ENCODE measurements at regions of chr3 and their contacts with region 1.

Region 1: DNA sequence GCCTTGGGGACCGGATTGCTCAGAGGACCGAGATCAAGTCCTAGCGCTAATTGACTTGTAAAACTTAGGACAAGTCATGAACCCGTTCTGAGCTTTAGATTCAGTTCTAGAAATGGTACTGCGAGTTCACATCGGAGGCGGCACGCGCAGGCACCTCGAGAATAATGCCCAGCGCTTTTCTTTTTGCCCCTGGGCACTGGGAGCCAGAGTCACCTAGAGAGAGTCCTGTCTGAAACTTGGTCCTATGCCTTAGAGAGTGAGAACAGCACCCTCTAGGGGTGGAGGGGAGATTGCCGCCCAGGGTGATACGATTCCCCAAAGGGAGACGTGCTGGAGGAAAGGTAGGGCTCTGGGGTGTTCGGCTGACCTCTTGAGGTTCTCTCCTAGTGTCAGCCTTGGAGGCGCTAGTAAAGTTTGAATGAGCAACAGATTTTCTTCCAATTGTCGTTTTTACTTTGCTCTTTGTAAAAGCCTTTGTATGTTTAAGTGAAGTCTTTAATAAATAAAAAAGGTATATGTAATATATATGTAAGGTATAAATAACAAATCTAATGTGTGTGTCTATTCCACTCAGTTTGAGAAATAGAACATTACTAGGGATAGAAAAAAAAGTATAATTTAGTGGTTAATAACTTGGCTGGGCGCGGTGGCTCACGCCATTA is 826 bp downstream of the EEF1AKMT4 start:
- DNase-seq: peak; percentile 86 to 90
- ATAC-seq: peak; percentile 86 to 87
- H3K4me3 ChIP-seq: peak overlapping the region; percentile 57
- H3K27ac ChIP-seq: peak overlapping the region; percentile 79 to 98
- H3K4me1 ChIP-seq: peaks cover 8% of the 10 kb centered on the region; the same call in 2 of the 3 replicates
- CTCF ChIP-seq: peak; percentile 73
- EP300 ChIP-seq: no peak
- POLR2A ChIP-seq: no peak
- RAD21 ChIP-seq: peak; percentile 62 to 63

Region 2: GRCh38 chr3:184261270-184261853 is 11.1 kb after region 1 on chr3 and contains the start of gene CAMK2N2:
- CTCF ChIA-PET with region 1: interaction called, 27 read pairs
- POLR2A ChIA-PET with region 1: no interaction called
- DNase-seq: peak; percentile 68 to 83
- ATAC-seq: peak; percentile 74 to 86
- H3K4me3 ChIP-seq: peak within 1 kb of the TSS; percentile 53
- H3K27ac ChIP-seq: peak within 1 kb of the TSS; percentile 51 to 80; a peak in 4 of 6 replicates
- H3K4me1 ChIP-seq: peaks cover 13% of the 10 kb centered on the region; the same call in 1 of the 3 replicates
- CTCF ChIP-seq: no peak
- EP300 ChIP-seq: no peak
- POLR2A ChIP-seq: no peak
- RAD21 ChIP-seq: no peak
- polyA plus RNA-seq, gene CAMK2N2: 0.05 and 0.20 TPM in 2 replicates